Aorta (tissue), 5 donors: ENCODE measurements at regions of chr1 and their contacts with region 1.

Region 1: GRCh38 chr1:64686828-64687724 is 57.8 kb upstream of the RAVER2 start:
- DNase-seq: no peak
- ATAC-seq: peak; percentile 74
- H3K4me3 ChIP-seq: no peak overlapping the region
- H3K27ac ChIP-seq: peak overlapping the region; percentile 2 to 65
- H3K4me1 ChIP-seq: no peaks in the 10 kb centered on the region
- H3K27me3 ChIP-seq: no peaks in the 10 kb centered on the region

Region 2: DNA sequence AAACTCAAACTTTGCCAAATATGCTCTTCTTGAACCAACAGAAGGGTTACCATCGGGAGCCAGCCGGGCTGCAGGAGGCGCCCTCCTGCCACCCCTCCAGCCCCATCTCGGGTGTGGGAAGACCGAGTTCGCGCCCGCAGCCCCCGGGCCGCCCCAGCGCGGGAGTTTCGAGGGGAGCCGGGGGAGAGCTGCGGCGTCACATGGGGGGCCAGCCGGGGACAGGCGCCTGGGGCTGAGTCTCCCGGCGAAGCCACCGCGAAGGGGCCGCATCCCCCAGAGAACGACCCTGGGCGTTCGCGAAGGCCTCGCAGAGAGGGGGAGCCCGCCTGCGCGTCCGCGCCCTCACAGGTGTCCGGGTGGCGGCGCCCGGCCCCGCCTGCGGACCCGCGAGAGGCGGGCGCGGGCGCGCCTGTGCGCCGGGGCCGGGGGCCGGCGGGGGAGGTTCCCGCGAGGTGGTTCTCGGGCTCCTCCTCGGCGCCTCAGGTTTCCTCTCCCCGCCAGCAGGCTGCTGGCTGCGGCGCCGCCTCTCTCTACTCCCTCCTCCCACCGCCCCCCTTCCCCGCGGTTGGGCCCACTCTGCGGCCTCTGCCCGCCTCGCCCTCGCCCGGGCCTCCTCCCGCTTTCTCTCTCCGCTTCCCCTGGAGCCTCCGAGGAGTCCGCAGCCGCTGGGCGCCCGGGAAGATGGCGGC is 57.6 kb after region 1 on chr1 and contains the start of gene RAVER2:
- intact Hi-C with region 1: loop called (anchors 5 kb)
- DNase-seq: peak; percentile 84 to 90
- ATAC-seq: peak; percentile 84
- H3K4me3 ChIP-seq: peak within 1 kb of the TSS; percentile 87 to 89
- H3K27ac ChIP-seq: peak within 1 kb of the TSS; percentile 57 to 75
- H3K4me1 ChIP-seq: peaks cover 0 to 9% of the 10 kb centered on the region in 2 donors
- H3K27me3 ChIP-seq: no peaks in the 10 kb centered on the region
- total RNA-seq, gene RAVER2: 18.2 to 22.5 TPM